ENCODE measurements at regions of chr4 and their contacts with region 1.

Region 1: GRCh38 chr4:183074296-183074990 is 24.6 kb upstream of the WWC2 start:
- DNase-seq: no peak
- ATAC-seq: peak; percentile 76 to 77
- H3K4me3 ChIP-seq: no peak overlapping the region
- H3K27ac ChIP-seq: no peak overlapping the region
- H3K4me1 ChIP-seq: no peaks in the 10 kb centered on the region
- H3K27me3 ChIP-seq: no peaks in the 10 kb centered on the region
- CTCF ChIP-seq: no peak

Region 2: GRCh38 chr4:182547435-182547834 is 527.0 kb before region 1 on chr4:
- intact Hi-C with region 1: no loop called
- DNase-seq: no peak
- ATAC-seq: no peak
- H3K4me3 ChIP-seq: no peak overlapping the region
- H3K27ac ChIP-seq: no peak overlapping the region
- H3K4me1 ChIP-seq: no peaks in the 10 kb centered on the region
- H3K27me3 ChIP-seq: no peaks in the 10 kb centered on the region
- CTCF ChIP-seq: no peak

Region 3: GRCh38 chr4:183249857-183250256 is 175.4 kb after region 1 on chr4:
- intact Hi-C with region 1: loop called (anchors 5 kb)
- DNase-seq: no peak
- ATAC-seq: peak; percentile 54 to 76
- H3K4me3 ChIP-seq: no peak overlapping the region
- H3K27ac ChIP-seq: no peak overlapping the region
- H3K4me1 ChIP-seq: peaks cover 13% of the 10 kb centered on the region
- H3K27me3 ChIP-seq: no peaks in the 10 kb centered on the region
- CTCF ChIP-seq: peak; percentile 43